ENCODE measurements at regions of chrX and their contacts with region 1.

Region 1: GRCh38 chrX:21940356-21940829 is at the start of gene SMS:
- DNase-seq: peak; percentile 59 to 79
- H3K4me3 ChIP-seq: peak within 1 kb of the TSS; percentile 78
- H3K27ac ChIP-seq: no peak within 1 kb of the TSS; the same call in 1 of the 2 replicates
- H3K4me1 ChIP-seq: peaks cover 19% of the 10 kb centered on the region
- H3K27me3 ChIP-seq: no peaks in the 10 kb centered on the region
- CTCF ChIP-seq: no peak
- total RNA-seq, gene SMS: 186 and 218 TPM in 2 replicates

Region 2: DNA sequence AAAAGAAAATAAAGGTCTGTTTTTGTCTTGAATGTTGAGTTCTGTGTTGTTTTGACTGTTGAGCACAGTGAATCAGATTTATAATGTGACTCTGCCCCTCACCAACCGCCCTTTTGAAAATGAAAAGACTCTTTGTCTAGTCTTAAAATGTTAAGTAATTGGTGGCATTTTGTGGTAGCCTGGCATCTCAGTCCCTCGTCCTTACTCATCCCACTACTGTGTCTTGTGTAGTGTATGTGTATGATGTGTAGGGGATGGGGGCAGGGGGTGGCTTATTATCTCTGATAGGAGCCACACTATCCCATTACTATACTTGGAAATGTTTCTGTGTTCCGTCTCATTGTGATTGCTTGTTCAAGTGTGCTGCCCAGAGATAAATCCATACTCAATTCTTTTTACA is 294.5 kb before region 1 on chrX:
- CTCF ChIA-PET with region 1: no interaction called
- POLR2A ChIA-PET with region 1: no interaction called
- intact Hi-C with region 1: no loop called
- DNase-seq: no peak
- H3K4me3 ChIP-seq: no peak overlapping the region
- H3K27ac ChIP-seq: no peak overlapping the region
- H3K4me1 ChIP-seq: no peaks in the 10 kb centered on the region
- H3K27me3 ChIP-seq: no peaks in the 10 kb centered on the region
- CTCF ChIP-seq: no peak

Region 3: DNA sequence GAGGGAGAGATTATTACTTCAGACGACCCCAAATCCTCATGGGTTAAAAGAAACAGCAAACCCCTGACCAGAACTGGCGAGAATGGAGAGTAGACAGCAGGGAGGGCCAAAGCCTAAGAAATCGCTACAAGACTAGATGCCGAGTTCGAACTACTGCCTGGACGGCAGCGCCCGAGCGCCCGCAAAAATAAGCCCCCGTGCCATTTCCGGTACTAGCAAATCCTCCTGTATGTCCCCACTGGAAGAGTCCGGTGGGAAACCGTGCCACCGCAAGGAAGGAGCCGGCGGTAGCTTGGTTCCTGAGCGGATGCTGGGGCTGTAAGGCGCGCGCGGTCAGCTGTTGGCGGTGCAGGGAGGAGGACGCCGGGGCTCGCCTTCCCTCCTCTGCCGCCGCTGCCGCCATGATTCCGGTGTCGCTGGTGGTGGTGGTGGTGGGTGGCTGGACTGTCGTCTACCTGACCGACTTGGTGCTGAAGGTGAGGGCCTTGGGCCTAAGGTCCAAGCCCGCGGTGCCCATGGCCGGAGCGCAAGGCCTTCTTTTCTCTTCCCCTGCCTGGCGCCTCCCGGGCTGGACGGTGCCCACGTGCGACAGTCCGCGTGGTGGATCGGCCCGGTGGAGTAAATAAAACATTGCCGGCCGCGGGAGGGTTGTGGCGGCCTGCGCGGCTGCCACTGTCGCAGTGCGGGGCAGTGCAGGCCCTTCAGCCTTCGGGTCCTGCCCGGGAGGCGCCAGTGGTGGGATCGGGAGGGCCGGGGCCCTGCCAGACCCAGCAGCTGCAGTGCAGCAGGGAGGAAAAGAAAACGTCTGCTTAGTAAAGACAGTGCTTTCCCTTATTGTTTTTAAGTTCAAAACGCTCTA is 100.8 kb before region 1 on chrX and contains the start of gene MBTPS2:
- CTCF ChIA-PET with region 1: no interaction called
- POLR2A ChIA-PET with region 1: no interaction called
- intact Hi-C with region 1: loop called (anchors 10 kb)
- DNase-seq: peak; percentile 71 to 79
- H3K4me3 ChIP-seq: peak within 1 kb of the TSS; percentile 89
- H3K27ac ChIP-seq: peak within 1 kb of the TSS; percentile 67
- H3K4me1 ChIP-seq: no peaks in the 10 kb centered on the region; the same call in 1 of the 2 replicates
- H3K27me3 ChIP-seq: no peaks in the 10 kb centered on the region
- CTCF ChIP-seq: peak; percentile 34; the same call in 1 of the 2 replicates
- total RNA-seq, gene MBTPS2: 12.7 and 16.9 TPM in 2 replicates

Region 4: GRCh38 chrX:21926527-21927278 is 13.7 kb before region 1 on chrX:
- CTCF ChIA-PET with region 1: no interaction called
- POLR2A ChIA-PET with region 1: interaction called, 5 read pairs
- intact Hi-C with region 1: loop called (anchors 1 kb)
- DNase-seq: peak; percentile 24 to 94
- H3K4me3 ChIP-seq: no peak overlapping the region
- H3K27ac ChIP-seq: peak overlapping the region; percentile 82
- H3K4me1 ChIP-seq: peaks cover 17% of the 10 kb centered on the region
- H3K27me3 ChIP-seq: no peaks in the 10 kb centered on the region
- CTCF ChIP-seq: no peak